Activated CD4-positive, alpha-beta memory T cell treated with anti-CD3 and anti-CD28 coated beads for 36 hours (primary cell): ENCODE measurements at regions of chr3 and their contacts with region 1.

Region 1: DNA sequence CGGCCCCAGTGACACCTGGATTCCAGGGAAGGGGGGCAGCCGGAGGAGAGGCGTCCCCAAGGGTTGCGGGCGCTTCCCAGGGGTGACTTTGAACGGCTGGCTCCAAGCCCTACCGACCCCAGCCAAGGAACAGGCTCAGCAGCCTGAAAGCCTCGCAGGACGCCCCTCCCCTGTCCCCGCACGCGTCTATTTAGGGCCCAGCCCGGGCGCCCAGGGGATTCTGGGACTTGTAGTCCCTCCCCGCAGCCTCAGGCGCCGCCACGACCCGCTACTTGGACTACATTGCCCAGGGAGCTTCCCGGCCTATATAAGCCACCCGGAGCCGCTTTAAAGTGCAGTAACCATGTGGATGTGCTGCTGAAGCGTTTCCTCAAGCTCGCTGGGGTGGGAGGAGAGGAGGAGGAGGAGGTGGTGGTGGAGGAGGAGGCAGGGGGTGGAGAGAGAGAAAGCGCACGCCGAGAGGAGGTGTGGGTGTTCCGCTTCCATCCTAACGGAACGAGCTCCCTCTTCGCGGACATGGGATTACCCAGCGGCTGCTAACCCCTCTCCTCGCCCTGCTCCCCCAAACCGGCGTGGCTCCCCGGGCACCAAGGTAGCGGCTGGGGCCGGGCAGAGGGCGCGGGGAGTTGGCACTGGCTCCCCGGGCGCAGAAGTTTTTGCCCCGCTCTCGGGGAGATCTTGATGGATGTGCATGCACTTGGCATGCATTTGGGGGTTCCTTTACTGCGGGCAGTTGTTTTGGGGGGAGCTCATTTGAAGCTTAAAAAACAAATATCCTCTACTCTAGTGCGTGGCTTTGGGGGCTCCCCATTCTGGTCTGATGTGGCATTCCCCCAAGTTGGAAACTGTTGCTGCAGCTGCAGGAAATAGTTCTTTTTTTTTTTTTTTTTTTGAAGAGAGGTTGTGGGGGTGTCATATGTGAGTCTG is at the start of gene ITPR1:
- DNase-seq: peak; percentile 98
- H3K4me3 Mint-ChIP-seq: peak within 1 kb of the TSS; percentile 91
- H3K27ac Mint-ChIP-seq: peak within 1 kb of the TSS; percentile 79
- H3K4me1 Mint-ChIP-seq: peaks cover 41% of the 10 kb centered on the region
- H3K27me3 Mint-ChIP-seq: peaks cover 5% of the 10 kb centered on the region
- total RNA-seq, gene ITPR1: 49.1 to 53.1 TPM

Region 2: DNA sequence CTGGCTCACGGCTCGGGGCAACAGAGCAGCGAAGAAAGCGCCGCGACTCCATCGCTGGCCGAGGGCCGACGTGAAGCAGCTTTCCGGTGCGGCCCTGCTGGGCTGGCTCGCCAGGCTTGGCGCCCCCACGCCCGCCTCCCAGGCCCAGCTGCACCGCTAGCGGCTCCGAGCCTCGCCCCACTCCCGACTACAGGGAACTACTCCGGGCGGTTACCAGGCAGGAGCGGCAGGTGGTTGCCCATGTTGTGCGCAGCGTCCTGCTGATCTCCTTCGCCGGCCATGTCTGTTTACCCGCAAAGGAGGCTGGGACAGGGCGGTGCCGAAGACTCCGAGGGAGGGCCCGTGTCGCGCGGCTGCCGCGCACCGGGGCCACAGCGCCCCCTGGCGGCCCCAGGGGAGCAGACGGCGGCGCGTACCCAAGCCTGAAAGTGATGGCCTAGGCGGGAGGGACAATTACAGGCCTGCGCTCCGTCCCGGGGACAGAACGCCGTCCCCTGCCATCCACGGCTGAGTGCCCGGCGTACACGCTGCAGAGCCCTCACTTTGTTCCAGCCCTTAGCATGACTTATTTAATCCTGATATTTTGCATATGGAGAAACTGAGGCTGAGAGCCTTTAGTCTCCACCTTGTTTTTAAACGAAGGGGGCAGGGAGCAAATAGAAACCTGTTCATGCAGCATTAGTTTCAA is 1313.7 kb before region 1 on chr3 and contains the start of gene CRBN:
- CTCF ChIA-PET with region 1: no interaction called
- POLR2A ChIA-PET with region 1: no interaction called
- intact Hi-C with region 1: loop called (anchors 1 kb)
- DNase-seq: peak; percentile 92
- H3K4me3 Mint-ChIP-seq: peak within 1 kb of the TSS; percentile 91
- H3K27ac Mint-ChIP-seq: peak within 1 kb of the TSS; percentile 88
- H3K4me1 Mint-ChIP-seq: peaks cover 49% of the 10 kb centered on the region
- H3K27me3 Mint-ChIP-seq: no peaks in the 10 kb centered on the region
- total RNA-seq, gene CRBN: 40.4 to 45.4 TPM

Region 3: DNA sequence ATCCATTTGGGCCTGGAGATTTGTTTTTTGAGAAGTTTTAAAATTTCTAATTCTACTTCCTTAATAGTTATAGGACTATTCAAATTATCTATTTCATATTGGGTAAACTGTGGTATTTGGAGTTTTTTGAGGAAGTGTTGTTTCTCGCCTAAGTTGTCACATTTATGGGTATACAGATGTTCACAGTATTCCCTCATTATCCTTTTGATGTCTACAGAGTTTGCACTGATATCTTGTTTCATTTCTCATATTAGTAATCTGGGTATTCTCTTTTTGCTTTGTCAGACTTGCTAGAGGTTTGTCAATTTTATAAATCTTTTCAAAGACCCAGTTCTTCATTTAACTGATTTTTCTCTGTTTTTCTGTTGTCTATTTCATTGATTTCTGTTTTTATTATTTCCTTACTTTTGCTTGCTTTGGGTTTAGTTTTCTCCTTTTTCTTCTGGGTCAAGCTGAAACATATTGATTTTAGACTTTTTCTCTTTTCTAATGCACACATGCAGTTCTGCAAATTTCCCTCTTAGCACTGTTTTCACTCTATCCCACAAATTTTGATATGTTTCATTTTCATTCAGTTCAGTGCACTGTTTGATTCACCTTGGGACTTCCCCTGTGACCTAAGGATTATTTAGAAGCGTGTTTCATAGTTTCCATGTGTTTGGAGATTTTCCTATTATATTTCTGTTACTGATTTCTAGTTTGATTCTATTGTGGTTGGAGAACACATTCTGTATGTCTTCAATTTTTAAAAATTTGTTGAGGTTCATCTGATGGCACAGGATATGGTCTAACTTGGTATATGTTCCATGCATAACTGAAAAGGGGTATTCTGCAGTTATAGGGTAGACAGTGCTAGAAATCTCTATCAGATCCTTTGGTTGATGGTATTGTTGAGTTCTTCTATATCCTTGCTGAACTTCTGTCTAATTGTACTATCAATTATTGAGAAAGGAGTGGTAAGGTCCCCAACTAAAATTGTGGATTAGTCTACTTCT is 105.8 kb before region 1 on chr3:
- CTCF ChIA-PET with region 1: no interaction called
- POLR2A ChIA-PET with region 1: no interaction called
- intact Hi-C with region 1: loop called (anchors 1 kb)
- DNase-seq: no peak
- H3K4me3 Mint-ChIP-seq: no peak overlapping the region
- H3K27ac Mint-ChIP-seq: peak overlapping the region; percentile 47
- H3K4me1 Mint-ChIP-seq: peaks cover 32% of the 10 kb centered on the region
- H3K27me3 Mint-ChIP-seq: no peaks in the 10 kb centered on the region

Region 4: DNA sequence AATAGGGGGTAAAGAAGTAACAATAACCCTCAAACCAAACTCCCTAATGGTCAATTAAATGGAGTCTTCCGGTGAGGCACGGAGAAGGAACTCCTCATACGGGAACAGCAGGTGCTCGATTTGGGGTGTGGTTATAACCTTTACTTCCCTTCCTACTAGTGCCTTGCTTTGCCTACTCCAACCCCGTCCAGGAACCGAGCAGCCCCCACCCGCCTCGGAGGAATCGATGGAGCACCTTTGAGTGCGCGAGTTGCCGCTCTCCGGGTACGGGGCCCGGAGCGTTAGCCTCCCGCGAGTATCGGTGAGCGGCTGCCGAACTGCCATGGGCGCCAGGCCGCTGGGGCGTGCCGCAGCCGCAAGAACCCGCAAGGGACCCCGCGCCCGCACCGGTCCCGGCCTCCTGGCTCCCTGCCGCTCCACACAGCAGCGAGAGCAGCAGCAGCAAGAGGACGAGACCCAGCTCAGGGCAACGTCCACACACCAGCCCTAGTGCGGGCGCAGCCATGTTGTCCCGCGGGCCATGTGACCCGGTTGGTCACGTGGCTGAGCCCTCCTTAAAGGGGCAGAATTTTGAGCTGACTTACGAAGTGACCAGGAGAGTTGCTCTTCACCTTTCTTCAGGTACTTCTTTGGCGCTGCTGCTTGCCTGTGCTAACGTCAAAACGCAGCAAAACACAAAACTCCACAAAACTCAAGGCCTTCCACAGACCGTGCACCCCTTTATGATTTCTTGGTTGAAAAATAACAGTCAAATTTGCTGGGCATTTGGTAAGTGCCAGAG is 26.3 kb before region 1 on chr3 and contains the start of gene SUMF1:
- CTCF ChIA-PET with region 1: interaction called, 6 read pairs
- POLR2A ChIA-PET with region 1: interaction called, 34 read pairs
- intact Hi-C with region 1: loop called (anchors 1 kb)
- DNase-seq: peak; percentile 84
- H3K4me3 Mint-ChIP-seq: peak within 1 kb of the TSS; percentile 90
- H3K27ac Mint-ChIP-seq: peak within 1 kb of the TSS; percentile 87
- H3K4me1 Mint-ChIP-seq: peaks cover 14% of the 10 kb centered on the region
- H3K27me3 Mint-ChIP-seq: no peaks in the 10 kb centered on the region
- total RNA-seq, gene SUMF1: 5.1 to 5.6 TPM

Region 5: DNA sequence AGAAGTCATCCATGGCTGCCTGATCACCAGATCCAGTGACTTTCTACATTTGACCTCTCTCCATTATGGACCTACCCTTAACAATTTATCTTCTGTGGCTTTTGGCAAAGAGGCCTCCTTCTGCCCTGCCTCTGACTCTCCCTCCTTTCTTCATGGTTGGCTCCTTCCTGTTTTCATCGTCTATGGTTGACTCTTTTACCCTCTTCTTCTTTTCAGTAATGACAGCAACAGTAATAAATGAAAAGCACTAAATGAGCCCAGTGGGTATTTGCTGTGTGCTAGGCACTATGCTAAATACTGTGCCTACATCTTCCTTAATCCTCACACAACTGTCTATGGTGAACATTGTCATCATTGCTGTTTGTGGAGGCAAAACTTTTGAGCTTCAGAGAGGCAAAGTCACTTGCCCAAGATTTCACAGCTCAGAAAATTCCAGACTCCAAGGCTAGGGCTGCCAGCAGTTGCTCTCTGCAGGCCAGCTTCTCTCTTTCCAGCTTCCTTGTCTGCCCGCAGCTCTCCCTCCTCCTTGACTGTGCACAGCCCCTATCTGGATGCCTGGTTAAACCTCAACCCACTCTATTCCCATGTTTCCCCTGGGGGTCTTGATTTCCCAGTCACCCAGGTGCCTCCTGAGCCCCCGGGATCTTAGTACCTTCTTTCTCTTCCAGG is 24.5 kb after region 1 on chr3:
- CTCF ChIA-PET with region 1: interaction called, 8 read pairs
- POLR2A ChIA-PET with region 1: interaction called, 28 read pairs
- intact Hi-C with region 1: loop called (anchors 1 kb)
- DNase-seq: no peak
- H3K4me3 Mint-ChIP-seq: no peak overlapping the region
- H3K27ac Mint-ChIP-seq: peak overlapping the region; percentile 69
- H3K4me1 Mint-ChIP-seq: peaks cover 28% of the 10 kb centered on the region
- H3K27me3 Mint-ChIP-seq: no peaks in the 10 kb centered on the region

Region 6: DNA sequence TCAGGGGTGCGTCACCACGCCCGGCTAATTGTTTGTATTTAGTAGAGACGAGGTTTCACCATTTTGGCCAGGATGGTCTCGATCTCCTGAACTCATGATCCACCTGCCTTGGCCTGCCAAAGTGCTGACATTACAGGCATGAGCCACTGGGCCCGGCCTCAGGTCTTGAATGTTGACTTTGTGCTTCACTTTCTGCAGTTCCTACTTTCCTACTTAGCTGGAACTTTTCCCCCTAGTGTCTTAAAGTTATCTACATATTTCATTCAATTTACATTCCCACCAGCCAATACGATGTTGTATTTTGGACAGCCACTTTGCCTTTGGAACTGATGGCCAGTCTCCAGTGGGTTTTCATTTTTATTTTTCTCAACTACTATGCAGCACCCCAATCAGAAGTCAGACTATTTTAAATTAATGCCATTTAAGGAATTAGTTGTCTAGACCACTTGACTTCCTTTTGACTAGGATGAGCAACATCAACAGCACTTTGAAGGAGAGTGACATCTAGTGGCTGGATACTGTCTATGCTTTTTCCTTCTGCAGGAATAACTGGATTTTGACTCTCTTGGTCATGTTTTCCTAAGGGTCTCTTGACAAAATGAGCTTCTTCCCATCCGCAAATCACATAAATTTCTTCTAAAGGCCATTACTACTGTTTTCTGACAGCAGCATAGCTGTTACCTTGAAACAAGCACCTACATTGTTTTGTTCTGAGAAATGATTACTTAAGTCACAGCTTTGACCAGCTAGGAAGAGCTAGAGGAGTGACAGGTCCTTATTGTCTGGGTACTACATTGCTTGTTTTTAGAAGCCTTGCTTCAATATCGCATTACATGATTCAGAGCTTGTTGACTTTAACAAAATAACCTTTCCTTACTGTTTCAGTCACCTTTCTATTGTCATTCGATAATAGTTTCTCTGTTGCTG is 140.1 kb after region 1 on chr3:
- CTCF ChIA-PET with region 1: interaction called, 19 read pairs
- POLR2A ChIA-PET with region 1: interaction called, 4 read pairs
- intact Hi-C with region 1: no loop called
- DNase-seq: no peak
- H3K4me3 Mint-ChIP-seq: no peak overlapping the region
- H3K27ac Mint-ChIP-seq: no peak overlapping the region
- H3K4me1 Mint-ChIP-seq: peaks cover 5% of the 10 kb centered on the region
- H3K27me3 Mint-ChIP-seq: no peaks in the 10 kb centered on the region

Region 7: DNA sequence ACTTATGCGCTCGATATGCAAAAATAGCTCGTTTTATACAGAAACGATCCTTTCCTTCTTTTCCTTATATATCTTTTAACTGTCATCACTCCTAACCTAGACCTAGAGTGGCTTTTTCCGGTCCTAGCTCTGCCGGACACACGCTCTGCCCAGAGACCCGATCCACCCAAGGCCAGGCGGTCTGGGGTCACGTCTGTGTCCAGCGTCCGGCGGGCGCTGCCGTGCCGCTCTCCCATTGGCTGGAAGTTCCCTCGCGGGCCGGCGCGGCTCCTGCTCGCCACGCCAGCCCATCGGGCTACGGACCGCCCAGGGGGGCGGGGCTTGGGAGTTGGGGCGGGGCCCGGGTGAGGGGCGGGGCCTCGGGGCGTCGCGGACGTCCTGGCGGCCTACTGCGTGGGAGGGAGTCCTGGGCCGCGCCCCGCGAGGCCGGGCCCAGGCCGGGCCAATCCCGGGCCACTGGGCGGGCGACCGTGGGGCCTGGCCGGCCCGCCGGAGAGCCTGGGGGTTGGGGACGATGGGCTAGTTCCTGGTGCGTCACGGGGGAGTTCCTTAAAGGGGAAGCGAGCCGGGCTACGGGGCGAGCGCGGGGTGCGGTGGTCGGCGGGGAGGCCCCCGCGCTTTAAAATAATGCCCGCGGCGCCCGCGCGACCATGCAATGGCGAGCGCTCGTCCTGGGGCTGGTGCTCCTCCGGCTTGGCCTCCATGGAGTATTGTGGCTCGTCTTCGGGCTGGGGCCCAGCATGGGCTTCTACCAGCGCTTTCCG is 694.1 kb after region 1 on chr3 and contains the start of gene EDEM1:
- CTCF ChIA-PET with region 1: no interaction called
- POLR2A ChIA-PET with region 1: interaction called, 4 read pairs
- intact Hi-C with region 1: loop called (anchors 1 kb)
- DNase-seq: peak; percentile 98
- H3K4me3 Mint-ChIP-seq: peak within 1 kb of the TSS; percentile 96
- H3K27ac Mint-ChIP-seq: peak within 1 kb of the TSS; percentile 98
- H3K4me1 Mint-ChIP-seq: peaks cover 27% of the 10 kb centered on the region
- H3K27me3 Mint-ChIP-seq: no peaks in the 10 kb centered on the region
- total RNA-seq, gene EDEM1: 192 to 203 TPM